Dorsolateral prefrontal cortex (tissue), 120 donors: ENCODE measurements at regions of chr1 and their contacts with region 1.

Region 1: DNA sequence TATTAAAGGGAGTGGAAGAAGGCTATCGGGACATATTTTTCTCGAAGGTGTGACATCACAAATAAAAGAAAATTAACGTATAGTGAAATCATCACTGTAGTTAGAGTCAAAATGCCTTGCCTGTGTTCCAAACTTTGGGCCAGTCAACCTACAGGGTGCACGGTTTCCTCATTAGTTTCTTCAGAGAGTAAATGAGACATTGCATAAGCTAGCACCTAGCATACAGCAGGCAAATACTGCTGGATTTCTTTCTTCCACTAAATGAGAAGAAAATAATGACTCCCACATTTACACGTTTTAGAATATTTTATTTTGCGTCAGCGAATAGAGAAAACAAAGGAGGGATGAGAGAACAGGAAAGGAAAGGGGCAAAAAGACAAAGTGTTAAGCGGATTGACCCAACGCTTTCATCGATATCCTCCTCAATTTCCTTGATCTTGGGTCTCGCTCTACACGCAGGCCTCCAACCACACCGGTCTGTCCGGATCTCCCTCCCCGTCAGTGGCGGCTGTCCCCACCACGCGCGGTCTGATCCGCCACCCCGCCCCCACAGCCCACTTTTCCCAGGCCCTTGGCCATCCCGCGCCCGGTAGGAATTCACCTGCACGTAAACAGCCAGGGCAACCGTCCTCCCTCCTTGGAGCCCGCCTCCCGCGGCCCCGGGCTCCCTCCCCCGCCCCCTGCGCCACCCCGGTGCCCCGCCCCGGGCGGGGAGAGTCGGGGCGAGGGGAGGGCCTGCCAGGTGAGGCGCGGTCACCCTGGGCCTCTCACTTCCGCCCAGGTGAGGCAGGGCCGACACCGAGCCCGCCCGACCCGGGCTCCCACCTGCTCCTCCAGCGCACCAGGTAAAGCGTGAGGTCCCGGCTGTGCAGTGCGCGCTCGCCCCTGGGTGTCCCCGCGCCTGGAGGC is at the start of gene PATJ:
- DNase-seq: peak in 8 of 10 donors; percentile 32 to 73 (median 58)
- H3K4me3 ChIP-seq: peak within 1 kb of the TSS; percentile 58 to 96 (median 85)
- H3K27ac ChIP-seq: peak within 1 kb of the TSS; percentile 15 to 98 (median 93)
- H3K27me3 ChIP-seq: no peaks in the 10 kb centered on the region
- CTCF ChIP-seq: peak in 1 of 56 donors; percentile 7
- total RNA-seq, gene PATJ: 12.2 to 32.2 (median 21.0) TPM

Region 2: DNA sequence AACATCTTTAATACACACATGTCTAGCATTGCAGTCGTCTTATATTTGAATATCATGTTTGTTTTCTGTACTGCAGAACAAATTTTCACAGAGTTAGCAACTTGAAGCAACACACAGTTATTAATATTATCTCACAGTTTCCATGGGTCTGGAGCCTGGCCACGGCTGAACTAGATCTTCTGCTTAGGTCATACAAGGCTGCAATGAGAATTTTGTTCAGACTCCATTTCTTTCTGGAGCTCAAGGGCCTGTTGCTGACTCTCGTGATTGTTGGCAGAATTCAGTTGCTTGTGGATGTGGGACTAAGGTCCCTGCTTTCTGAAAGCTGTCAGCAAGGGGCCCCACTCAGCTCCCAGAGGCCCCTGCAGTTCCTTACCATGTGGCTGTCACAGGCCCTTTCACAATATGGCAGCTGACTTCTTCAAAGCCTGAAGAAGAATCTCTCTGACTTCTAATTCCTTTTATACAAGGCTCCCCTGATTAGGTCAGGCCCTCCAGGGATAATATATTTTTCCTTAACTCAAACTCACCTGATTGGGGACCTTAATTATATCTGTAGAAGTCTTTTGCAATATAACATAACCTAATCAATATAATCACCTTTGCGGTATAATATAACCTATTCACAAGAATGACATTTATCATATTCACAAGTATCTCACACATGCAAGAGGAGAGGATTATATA is 363.3 kb before region 1 on chr1:
- intact Hi-C with region 1: no loop called
- DNase-seq: no peak
- H3K4me3 ChIP-seq: no peak overlapping the region
- H3K27ac ChIP-seq: no peak overlapping the region
- H3K27me3 ChIP-seq: no peaks in the 10 kb centered on the region
- CTCF ChIP-seq: no peak

Region 3: GRCh38 chr1:61585714-61586113 is 156.3 kb before region 1 on chr1:
- intact Hi-C with region 1: no loop called
- DNase-seq: no peak
- H3K4me3 ChIP-seq: no peak overlapping the region
- H3K27ac ChIP-seq: no peak overlapping the region
- H3K27me3 ChIP-seq: peaks cover 0 to 3% (median 0%) of the 10 kb centered on the region in 45 donors
- CTCF ChIP-seq: no peak

Region 4: DNA sequence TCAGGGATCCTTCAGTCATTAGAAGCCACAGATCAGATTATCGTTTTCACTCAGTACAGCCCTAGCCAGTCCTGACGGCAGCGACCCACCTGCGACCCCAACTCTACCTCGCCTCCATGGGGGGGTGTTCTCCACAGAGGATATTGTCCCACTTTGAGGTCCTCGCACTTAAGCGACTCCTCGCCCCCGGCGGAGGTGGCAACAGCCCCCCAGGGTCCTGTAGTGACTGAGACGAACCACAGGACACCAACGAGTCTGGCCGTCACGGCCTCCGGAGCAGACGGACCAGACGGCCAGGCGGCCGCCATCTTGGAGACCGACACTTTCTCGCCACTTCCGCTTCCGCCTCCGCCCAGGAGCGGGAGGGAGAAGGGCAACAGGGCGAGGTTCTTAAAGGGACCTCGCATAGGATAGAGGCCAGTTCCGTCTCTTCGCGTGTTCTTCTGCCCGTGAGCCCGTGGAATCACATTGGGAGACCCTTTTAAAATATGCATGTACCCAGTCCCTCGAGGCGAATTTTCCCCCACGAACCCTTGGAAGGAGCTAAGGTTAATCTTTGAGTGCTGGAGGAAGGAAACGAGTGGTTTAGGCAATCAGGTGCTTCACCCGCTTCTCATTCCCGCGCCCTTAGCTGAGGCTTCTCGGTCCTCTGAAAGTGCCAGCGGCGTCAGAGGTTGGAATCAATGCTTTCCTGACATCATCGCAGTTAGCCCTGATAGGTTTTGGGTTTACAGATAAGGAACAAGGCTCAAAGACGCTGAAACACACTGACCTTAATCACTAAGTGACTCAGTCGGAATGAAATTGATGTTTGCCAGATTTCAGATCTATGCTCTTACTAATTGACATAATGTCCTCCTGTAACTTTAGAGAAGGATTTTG is 16.9 kb before region 1 on chr1 and contains the start of gene TM2D1:
- intact Hi-C with region 1: loop called (anchors 1 to 2 kb)
- DNase-seq: peak; percentile 83 to 95 (median 90)
- H3K4me3 ChIP-seq: peak within 1 kb of the TSS; percentile 64 to 100 (median 94)
- H3K27ac ChIP-seq: peak within 1 kb of the TSS; percentile 16 to 95 (median 85)
- H3K27me3 ChIP-seq: no peaks in the 10 kb centered on the region
- CTCF ChIP-seq: peak in 26 of 56 donors; percentile 3 to 48 (median 24)
- total RNA-seq, gene TM2D1: 28.9 to 60.5 (median 44.1) TPM

Region 5: GRCh38 chr1:61851849-61852669 is 110.1 kb after region 1 on chr1:
- intact Hi-C with region 1: no loop called
- DNase-seq: no peak
- H3K4me3 ChIP-seq: no peak overlapping the region
- H3K27ac ChIP-seq: peak overlapping the region in 23 of 59 donors; percentile 3 to 69 (median 38)
- H3K27me3 ChIP-seq: no peaks in the 10 kb centered on the region
- CTCF ChIP-seq: peak; percentile 51 to 90 (median 74)

Region 6: GRCh38 chr1:62093261-62093660 is 351.3 kb after region 1 on chr1:
- intact Hi-C with region 1: no loop called
- DNase-seq: no peak
- H3K4me3 ChIP-seq: no peak overlapping the region
- H3K27ac ChIP-seq: no peak overlapping the region
- H3K27me3 ChIP-seq: no peaks in the 10 kb centered on the region
- CTCF ChIP-seq: no peak